ENCODE measurements at regions of chr9 and their contacts with region 1.

Region 1: DNA sequence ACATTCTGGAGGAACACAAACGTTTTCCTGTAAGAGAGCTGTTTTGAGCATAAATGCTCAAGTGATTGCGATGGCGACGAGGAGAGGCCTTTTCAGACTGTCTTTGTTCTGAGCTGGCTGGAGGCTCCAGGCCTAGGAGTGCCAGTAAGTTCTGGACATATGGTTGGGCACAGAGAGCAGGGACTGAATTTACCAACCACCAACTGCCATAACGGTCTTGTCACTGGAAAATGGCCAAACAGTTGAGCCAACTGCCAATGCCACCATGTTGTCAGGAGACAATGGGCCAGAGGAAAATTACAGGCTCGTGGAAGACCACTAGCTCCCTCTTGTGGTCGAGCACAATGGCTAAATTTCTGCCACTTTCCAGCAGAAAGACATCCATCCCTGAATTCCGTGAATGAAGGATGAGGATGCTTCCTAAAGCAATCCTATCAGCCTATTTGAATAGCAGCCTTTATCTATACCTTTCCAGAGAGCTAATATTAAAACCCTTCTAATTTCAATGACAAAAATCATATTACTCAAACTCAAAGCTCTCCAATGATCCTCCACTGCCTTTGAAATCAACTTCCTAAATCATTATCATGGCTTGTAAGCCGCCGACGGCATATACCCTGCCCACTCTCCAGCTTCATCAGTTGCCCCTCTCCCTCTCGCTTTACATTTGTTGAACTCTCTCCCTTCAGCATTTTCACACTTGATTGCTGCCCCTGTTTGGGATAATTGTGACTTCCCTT is 66.9 kb upstream of the GLIS3 start:
- DNase-seq: peak; percentile 32
- ATAC-seq: peak; percentile 73
- H3K4me3 ChIP-seq: no peak overlapping the region
- H3K27ac ChIP-seq: no peak overlapping the region
- H3K4me1 ChIP-seq: no peaks in the 10 kb centered on the region
- H3K27me3 ChIP-seq: no peaks in the 10 kb centered on the region
- CTCF ChIP-seq: peak; percentile 80 to 91 (median 84)
- POLR2A ChIP-seq: no peak
- RAD21 ChIP-seq: peak; percentile 88

Region 2: DNA sequence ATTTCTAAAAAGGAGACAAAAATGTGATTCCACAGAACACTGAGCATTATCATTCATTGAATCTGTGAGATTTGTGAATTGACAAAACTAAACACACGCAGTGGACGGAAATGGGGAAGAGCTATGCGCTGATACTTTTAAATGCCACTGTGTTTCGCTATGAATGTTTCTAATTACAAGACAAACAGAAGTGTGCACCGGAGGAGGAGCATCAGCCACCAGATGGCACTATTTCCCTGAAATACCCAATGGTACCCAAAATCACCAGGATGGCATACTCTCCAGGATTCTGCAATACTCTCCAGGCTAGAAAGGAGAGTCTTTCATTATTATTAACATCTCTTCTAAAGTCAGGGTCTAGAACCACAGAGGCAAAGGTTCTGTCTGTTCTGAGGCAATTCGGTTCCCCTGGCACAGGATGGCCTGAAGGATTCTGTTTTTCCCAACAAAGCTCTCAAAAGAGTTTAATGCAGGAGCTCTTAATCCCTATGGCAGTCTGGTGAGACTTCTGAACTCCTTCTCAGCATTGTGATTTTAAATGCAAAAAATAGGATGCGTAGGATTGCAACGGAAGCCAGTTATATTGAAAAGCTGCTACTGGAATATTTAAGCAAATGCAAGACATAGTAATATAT is 1509.1 kb before region 1 on chr9:
- CTCF ChIA-PET with region 1: interaction called, 9 read pairs
- POLR2A ChIA-PET with region 1: no interaction called
- RAD21 ChIA-PET with region 1: no interaction called
- intact Hi-C with region 1: loop called (anchors 2 kb)
- DNase-seq: peak; percentile 56
- ATAC-seq: peak; percentile 87
- H3K4me3 ChIP-seq: no peak overlapping the region
- H3K27ac ChIP-seq: no peak overlapping the region
- H3K4me1 ChIP-seq: no peaks in the 10 kb centered on the region
- H3K27me3 ChIP-seq: peaks cover 27% of the 10 kb centered on the region
- CTCF ChIP-seq: peak; percentile 72 to 92 (median 82)
- POLR2A ChIP-seq: no peak
- RAD21 ChIP-seq: peak; percentile 75

Region 3: GRCh38 chr9:3240656-3241268 is 1126.0 kb before region 1 on chr9:
- CTCF ChIA-PET with region 1: interaction called, 8 read pairs
- POLR2A ChIA-PET with region 1: no interaction called
- RAD21 ChIA-PET with region 1: no interaction called
- intact Hi-C with region 1: loop called (anchors 5 kb)
- DNase-seq: peak; percentile 65
- ATAC-seq: peak; percentile 99
- H3K4me3 ChIP-seq: no peak overlapping the region
- H3K27ac ChIP-seq: no peak overlapping the region
- H3K4me1 ChIP-seq: no peaks in the 10 kb centered on the region
- H3K27me3 ChIP-seq: no peaks in the 10 kb centered on the region
- CTCF ChIP-seq: peak; percentile 43 to 86 (median 81); a peak in 5 of 6 replicates
- POLR2A ChIP-seq: no peak
- RAD21 ChIP-seq: peak; percentile 64

Region 4: GRCh38 chr9:3467593-3468219 is 899.1 kb before region 1 on chr9:
- CTCF ChIA-PET with region 1: no interaction called
- POLR2A ChIA-PET with region 1: no interaction called
- RAD21 ChIA-PET with region 1: no interaction called
- intact Hi-C with region 1: loop called (anchors 10 kb)
- DNase-seq: peak; percentile 38
- ATAC-seq: peak; percentile 98
- H3K4me3 ChIP-seq: no peak overlapping the region
- H3K27ac ChIP-seq: no peak overlapping the region
- H3K4me1 ChIP-seq: no peaks in the 10 kb centered on the region
- H3K27me3 ChIP-seq: no peaks in the 10 kb centered on the region
- CTCF ChIP-seq: peak; percentile 47 to 90 (median 89); a peak in 5 of 6 replicates
- POLR2A ChIP-seq: no peak
- RAD21 ChIP-seq: peak; percentile 85

Region 5: GRCh38 chr9:4077499-4078102 is 289.2 kb before region 1 on chr9:
- CTCF ChIA-PET with region 1: interaction called, 5 read pairs
- POLR2A ChIA-PET with region 1: no interaction called
- RAD21 ChIA-PET with region 1: no interaction called
- intact Hi-C with region 1: loop called (anchors 10 kb)
- DNase-seq: peak; percentile 48
- ATAC-seq: peak; percentile 89
- H3K4me3 ChIP-seq: no peak overlapping the region
- H3K27ac ChIP-seq: no peak overlapping the region
- H3K4me1 ChIP-seq: peaks cover 0 to 8% of the 10 kb centered on the region in 2 experiments; a peak in 2 of 4 replicates
- H3K27me3 ChIP-seq: no peaks in the 10 kb centered on the region
- CTCF ChIP-seq: peak; percentile 78 to 93 (median 93)
- POLR2A ChIP-seq: no peak
- RAD21 ChIP-seq: peak; percentile 77

Region 6: DNA sequence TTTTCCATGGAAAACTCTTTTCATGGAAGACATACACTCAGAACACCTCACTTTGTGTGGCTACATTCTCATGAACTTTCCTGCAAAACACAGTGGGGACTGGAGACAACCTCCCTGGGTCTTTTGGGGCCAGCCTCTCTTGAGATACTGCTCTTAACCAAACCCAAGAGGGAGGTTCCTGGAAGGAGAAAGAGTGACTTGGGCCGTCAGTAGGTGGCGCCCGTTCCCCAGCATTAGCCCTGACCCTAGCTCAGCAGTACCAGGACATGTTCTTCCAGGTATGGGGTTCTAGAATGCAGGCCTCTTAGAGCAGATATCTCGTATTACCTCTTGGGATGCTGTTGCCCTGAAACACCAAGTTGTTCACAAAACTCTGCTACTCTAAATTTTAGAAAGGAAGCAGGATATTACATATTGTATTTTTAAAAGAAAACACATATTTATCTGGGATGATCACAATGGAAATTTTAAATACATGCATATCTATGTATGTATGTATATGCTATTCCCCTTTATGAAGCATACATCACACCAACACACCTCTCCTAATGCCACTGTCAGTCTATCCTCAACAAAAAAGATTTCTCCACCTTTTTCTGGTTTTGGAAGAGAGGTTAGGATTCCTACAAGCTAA is 51.1 kb before region 1 on chr9:
- CTCF ChIA-PET with region 1: interaction called, 62 read pairs
- POLR2A ChIA-PET with region 1: no interaction called
- RAD21 ChIA-PET with region 1: interaction called, 3 to 8 read pairs
- intact Hi-C with region 1: loop called (anchors 1 kb)
- DNase-seq: peak; percentile 71
- ATAC-seq: peak; percentile 100
- H3K4me3 ChIP-seq: no peak overlapping the region
- H3K27ac ChIP-seq: no peak overlapping the region
- H3K4me1 ChIP-seq: no peaks in the 10 kb centered on the region
- H3K27me3 ChIP-seq: no peaks in the 10 kb centered on the region
- CTCF ChIP-seq: peak; percentile 71 to 95 (median 79); a peak in 5 of 6 replicates
- POLR2A ChIP-seq: no peak
- RAD21 ChIP-seq: peak; percentile 91

Region 7: DNA sequence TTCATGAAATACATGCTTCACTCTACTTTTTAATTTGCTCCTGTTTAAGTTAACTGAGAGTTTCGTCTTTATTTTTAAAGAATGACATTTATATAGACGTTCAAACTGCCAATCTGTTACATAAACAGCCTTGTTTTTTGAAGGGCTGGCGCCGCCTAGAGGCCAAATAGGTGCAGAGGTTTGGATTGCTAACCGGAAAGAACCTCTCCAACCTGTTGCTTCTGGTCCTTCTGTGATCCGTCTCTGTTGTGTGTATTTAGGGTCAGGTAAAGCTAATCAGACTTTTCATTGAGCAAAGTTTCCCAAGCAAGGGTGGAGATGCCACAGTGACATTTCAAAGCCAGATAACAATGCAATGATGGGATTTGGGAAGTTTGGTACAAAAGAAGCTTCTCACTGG is 27.4 kb before region 1 on chr9:
- CTCF ChIA-PET with region 1: interaction called, 8 read pairs
- POLR2A ChIA-PET with region 1: no interaction called
- RAD21 ChIA-PET with region 1: interaction called in 1 of 2 experiments, 4 read pairs
- intact Hi-C with region 1: loop called (anchors 2 kb)
- DNase-seq: peak; percentile 81
- ATAC-seq: peak; percentile 92
- H3K4me3 ChIP-seq: peak overlapping the region in 1 of 2 experiments; percentile 12; a peak in 1 of 4 replicates
- H3K27ac ChIP-seq: 0 out of 2 replicates have a peak overlapping the region, but pooled peaks have one; percentile 25
- H3K4me1 ChIP-seq: peaks cover 0 to 14% of the 10 kb centered on the region in 2 experiments; a peak in 3 of 4 replicates
- H3K27me3 ChIP-seq: no peaks in the 10 kb centered on the region
- CTCF ChIP-seq: peak; percentile 83 to 99 (median 96)
- POLR2A ChIP-seq: no peak
- RAD21 ChIP-seq: peak; percentile 87